ENCODE measurements at regions of chr11 and their contacts with region 1.

Region 1: DNA sequence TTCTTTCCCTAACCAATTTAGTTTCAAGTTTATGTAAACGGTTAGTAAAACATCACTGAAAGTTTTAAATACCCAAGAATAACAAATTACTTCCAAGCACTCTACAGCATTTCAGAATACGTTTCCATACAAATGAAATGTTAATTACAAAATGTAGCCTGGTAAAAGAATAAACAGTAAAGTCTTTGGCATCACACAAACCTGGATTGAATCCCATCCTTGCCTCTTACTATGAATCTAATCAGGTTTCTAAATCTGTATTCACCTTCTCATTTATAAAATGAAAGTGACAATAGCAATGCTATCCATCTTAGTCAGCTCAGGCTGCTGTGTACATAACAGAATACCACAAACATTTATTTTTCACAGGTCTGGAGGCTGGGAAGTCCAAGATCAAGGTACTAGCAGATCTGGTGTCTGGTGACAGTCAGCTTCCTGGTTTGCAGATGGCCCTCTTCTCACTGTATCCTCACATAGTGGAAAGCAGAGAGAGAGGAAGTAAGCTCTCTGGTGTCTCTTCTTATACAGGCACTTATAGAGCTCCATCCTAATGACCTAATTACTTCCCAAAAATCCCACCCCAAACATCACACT is 19.2 kb downstream of the FAM168A start:
- DNase-seq: no peak

Region 2: GRCh38 chr11:73597956-73598718 is 19.4 kb after region 1 on chr11 and contains the start of gene FAM168A:
- intact Hi-C with region 1: no loop called
- DNase-seq: peak; percentile 99
- total RNA-seq, gene FAM168A: 32.7 to 38.3 TPM

Region 3: GRCh38 chr11:75474878-75475766 is 1896.4 kb after region 1 on chr11:
- intact Hi-C with region 1: loop called in 1 of 2 experiments (anchors 5 kb)
- DNase-seq: no peak